A673 (cell line): ENCODE measurements at regions of chr10 and their contacts with region 1.

Region 1: GRCh38 chr10:97372233-97372875 is 28.8 kb downstream of the RRP12 start:
- DNase-seq: no peak
- H3K4me3 ChIP-seq: no peak overlapping the region
- H3K27ac ChIP-seq: no peak overlapping the region
- H3K4me1 ChIP-seq: no peaks in the 10 kb centered on the region
- H3K27me3 ChIP-seq: no peaks in the 10 kb centered on the region
- CTCF ChIP-seq: no peak

Region 2: GRCh38 chr10:97388152-97388551 is 15.8 kb after region 1 on chr10:
- CTCF ChIA-PET with region 1: no interaction called
- POLR2A ChIA-PET with region 1: interaction called, 13 read pairs
- intact Hi-C with region 1: no loop called
- DNase-seq: no peak
- H3K4me3 ChIP-seq: no peak overlapping the region
- H3K27ac ChIP-seq: no peak overlapping the region
- H3K4me1 ChIP-seq: no peaks in the 10 kb centered on the region
- H3K27me3 ChIP-seq: no peaks in the 10 kb centered on the region
- CTCF ChIP-seq: no peak